ENCODE measurements at regions of chr5 and their contacts with region 1.

Region 1: DNA sequence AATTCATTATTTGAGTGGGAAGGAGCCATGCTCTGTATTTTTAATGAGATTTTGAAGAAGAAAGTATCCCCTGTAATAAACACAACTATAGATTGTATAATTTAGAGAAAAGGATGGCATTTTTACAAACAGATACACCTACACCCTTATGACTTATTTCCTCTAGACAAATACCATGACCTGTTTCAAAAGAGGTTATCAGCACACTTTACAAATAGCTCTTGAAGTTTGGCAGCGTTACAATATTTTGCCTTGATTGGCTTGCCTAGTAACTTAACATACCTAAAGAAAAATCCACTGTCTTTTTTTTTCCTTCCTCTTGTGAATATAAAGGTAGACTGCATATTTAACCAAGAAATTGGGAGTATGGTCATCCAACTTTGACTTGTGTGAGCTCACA is 28.5 kb upstream of the CETN3 start:
- DNase-seq: no peak
- H3K4me3 Mint-ChIP-seq: no peak overlapping the region
- H3K27ac Mint-ChIP-seq: no peak overlapping the region
- H3K4me1 Mint-ChIP-seq: peaks cover 9% of the 10 kb centered on the region
- H3K27me3 Mint-ChIP-seq: peaks cover 1% of the 10 kb centered on the region

Region 2: GRCh38 chr5:90326995-90327394 is 111.1 kb before region 1 on chr5:
- CTCF ChIA-PET with region 1: no interaction called
- POLR2A ChIA-PET with region 1: no interaction called
- DNase-seq: no peak
- H3K4me3 Mint-ChIP-seq: no peak overlapping the region
- H3K27ac Mint-ChIP-seq: no peak overlapping the region
- H3K4me1 Mint-ChIP-seq: no peaks in the 10 kb centered on the region
- H3K27me3 Mint-ChIP-seq: peaks cover 1% of the 10 kb centered on the region

Region 3: DNA sequence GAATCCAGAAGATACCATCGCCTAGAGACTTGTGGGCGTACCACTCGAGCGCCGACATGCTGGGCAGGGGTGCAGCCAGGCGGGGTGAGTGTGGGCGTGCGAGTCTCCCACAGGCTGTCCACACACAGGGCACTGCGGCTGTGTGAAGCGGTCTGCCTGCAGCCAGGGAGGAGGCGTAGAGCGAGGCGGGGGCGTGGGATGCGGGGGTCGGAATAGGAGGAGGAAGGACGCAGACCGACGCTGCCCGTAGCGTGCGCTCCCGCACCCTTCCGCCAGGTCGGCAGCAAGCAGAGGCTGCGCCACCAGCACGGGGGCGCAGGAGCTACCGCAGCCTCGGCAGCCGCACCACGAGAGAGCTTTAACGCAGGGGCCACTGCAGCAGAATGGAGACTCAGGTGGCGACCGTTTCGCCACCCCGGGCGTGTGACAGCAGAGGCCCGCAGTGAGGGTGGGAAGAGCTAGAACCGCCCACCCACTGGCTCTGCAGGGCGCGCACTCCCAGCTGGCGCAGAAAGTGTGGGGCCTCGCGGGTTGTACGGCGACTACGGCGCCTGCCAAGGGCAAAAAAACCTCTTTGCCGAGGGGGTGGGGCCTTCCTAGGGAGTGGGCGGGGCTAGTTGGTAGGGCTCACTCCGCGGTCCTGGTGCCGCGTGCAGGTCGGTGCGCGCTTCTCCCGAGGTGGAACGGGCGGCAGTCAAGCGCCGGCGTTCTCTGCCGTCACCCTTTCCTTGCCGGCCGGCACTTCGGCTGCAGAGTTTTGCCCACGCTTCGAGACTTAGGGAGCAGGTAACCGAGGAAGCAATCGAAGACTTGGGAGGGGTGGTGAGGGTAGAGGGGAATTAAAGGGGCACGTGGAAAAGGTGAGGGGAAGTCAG is 36.4 kb after region 1 on chr5 and contains the starts of genes MBLAC2 and POLR3G:
- CTCF ChIA-PET with region 1: interaction called, 16 read pairs
- POLR2A ChIA-PET with region 1: no interaction called
- DNase-seq: peak; percentile 94
- H3K4me3 Mint-ChIP-seq: peak within 1 kb of the TSS; percentile 89
- H3K27ac Mint-ChIP-seq: peak within 1 kb of the TSS; percentile 89
- H3K4me1 Mint-ChIP-seq: peaks cover 27% of the 10 kb centered on the region
- H3K27me3 Mint-ChIP-seq: no peaks in the 10 kb centered on the region
- total RNA-seq, gene MBLAC2: 3.9 to 4.9 TPM
- total RNA-seq, gene POLR3G: 2.8 to 4.2 TPM

Region 4: DNA sequence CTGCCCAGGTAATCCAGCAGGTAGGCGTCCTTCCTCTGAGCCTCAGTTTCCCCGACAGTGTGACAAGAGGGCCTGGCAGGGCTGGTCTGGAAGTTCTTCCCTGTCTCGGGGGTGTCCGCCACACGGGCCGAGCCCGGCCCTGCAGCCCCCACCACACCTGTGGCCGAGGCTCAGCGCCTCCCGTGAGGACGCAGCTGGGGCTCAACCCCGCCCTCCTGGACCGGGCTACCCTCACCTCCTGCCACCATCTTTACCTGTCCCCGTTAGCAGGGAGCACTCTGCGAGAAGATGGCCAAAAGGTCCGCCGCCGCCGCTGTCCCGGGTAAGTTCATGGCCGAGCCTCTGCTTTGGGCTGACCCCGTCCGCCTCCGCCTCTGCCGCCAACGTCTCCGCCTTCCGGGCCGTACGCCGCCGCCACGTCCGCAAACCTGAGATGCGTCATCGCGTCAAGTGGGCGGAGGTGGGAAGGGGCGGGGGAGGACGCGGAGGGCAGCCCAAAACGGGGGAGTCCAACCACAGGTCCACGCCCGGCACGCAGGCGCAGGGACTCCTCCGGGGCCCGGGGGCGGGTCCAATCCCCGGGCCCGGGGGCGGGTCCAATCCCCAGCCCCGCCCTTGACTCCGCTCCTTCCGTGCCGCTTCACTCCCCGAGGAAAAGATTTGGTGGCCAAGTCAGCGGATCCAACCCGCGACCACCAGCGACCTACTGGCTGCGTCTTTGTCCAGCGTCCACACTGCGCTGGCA is 91.3 kb after region 1 on chr5 and contains the start of gene LYSMD3:
- CTCF ChIA-PET with region 1: interaction called, 54 read pairs
- POLR2A ChIA-PET with region 1: interaction called, 3 read pairs
- DNase-seq: peak; percentile 98
- H3K4me3 Mint-ChIP-seq: peak within 1 kb of the TSS; percentile 87
- H3K27ac Mint-ChIP-seq: peak within 1 kb of the TSS; percentile 87
- H3K4me1 Mint-ChIP-seq: peaks cover 27% of the 10 kb centered on the region
- H3K27me3 Mint-ChIP-seq: peaks cover 22% of the 10 kb centered on the region
- total RNA-seq, gene LYSMD3: 20.6 to 22.5 TPM

Region 5: DNA sequence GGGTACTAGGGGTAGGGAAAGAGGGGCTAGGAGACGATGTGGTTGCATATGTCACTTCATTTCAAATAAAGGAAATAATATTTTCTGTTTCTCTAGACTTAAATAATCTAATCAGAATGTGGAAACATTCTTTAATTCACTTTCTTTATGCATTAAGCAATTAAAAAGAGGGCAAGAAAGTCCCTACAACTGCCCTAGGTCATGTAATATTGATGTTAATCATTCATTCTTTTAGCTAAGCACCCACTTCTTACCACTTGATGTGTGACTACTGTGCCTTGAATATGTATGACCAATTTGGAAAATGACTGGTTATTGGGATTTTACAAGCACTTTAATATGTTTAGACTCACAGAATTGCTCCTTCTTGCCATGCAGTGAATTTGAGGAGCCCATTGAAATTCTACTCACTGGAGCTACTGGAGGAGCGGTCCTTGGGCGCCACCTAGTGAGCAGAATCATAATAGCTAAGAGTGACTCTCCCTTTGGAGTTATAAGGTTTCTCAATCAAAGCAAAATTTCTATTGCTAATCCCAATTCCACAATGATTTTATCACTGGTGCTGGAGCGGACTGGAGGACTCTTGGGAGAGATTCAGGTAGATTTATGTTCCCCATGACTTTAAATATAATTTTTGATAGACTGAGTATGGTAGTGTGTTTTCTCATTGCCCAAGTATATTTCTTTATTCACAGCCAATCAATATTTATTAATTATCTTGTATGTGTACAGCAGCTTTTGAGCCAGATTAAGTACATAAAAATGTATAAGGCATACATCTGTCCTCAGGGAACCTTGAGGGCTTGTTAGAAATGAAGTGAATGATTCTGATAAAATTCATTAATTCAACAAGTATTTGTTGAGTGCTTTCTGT is 345.6 kb after region 1 on chr5:
- CTCF ChIA-PET with region 1: interaction called, 25 read pairs
- POLR2A ChIA-PET with region 1: no interaction called
- DNase-seq: peak; percentile 62
- H3K4me3 Mint-ChIP-seq: no peak overlapping the region
- H3K27ac Mint-ChIP-seq: no peak overlapping the region
- H3K4me1 Mint-ChIP-seq: no peaks in the 10 kb centered on the region
- H3K27me3 Mint-ChIP-seq: peaks cover 10% of the 10 kb centered on the region